GM12878 (cell line): ENCODE measurements at regions of chr5 and their contacts with region 1.

Region 1: GRCh38 chr5:95846554-95847260 is 24.2 kb upstream of the GLRX start:
- DNase-seq: no peak
- ATAC-seq: peak; percentile 82
- H3K4me3 ChIP-seq: no peak overlapping the region
- H3K27ac ChIP-seq: no peak overlapping the region
- H3K4me1 ChIP-seq: peaks cover 12% of the 10 kb centered on the region
- H3K27me3 ChIP-seq: no peaks in the 10 kb centered on the region
- CTCF ChIP-seq: peak; percentile 88 to 97 (median 95); a peak in 5 of 6 replicates
- EP300 ChIP-seq: no peak
- POLR2A ChIP-seq: no peak
- RAD21 ChIP-seq: peak; percentile 98

Region 2: GRCh38 chr5:95283761-95284415 is 562.8 kb before region 1 on chr5:
- CTCF ChIA-PET with region 1: no interaction called
- POLR2A ChIA-PET with region 1: no interaction called
- RAD21 ChIA-PET with region 1: no interaction called
- SMC1A ChIA-PET with region 1: no interaction called
- in situ Hi-C with region 1: no loop called
- intact Hi-C with region 1: loop called (anchors 5 kb)
- DNase-seq: no peak
- ATAC-seq: peak; percentile 86
- H3K4me3 ChIP-seq: peak overlapping the region; percentile 67
- H3K27ac ChIP-seq: no peak overlapping the region
- H3K4me1 ChIP-seq: no peaks in the 10 kb centered on the region
- H3K27me3 ChIP-seq: peaks cover 2 to 18% of the 10 kb centered on the region in 2 experiments
- CTCF ChIP-seq: peak; percentile 33 to 56 (median 55); a peak in 5 of 6 replicates
- EP300 ChIP-seq: no peak
- POLR2A ChIP-seq: no peak
- RAD21 ChIP-seq: no peak

Region 3: GRCh38 chr5:95655575-95655974 is 191.1 kb before region 1 on chr5:
- CTCF ChIA-PET with region 1: interaction called, 8 read pairs
- POLR2A ChIA-PET with region 1: interaction called, 3 read pairs
- RAD21 ChIA-PET with region 1: no interaction called
- SMC1A ChIA-PET with region 1: interaction called, 19 read pairs
- in situ Hi-C with region 1: loop called (anchors 5 kb)
- intact Hi-C with region 1: no loop called
- DNase-seq: no peak
- ATAC-seq: no peak
- H3K4me3 ChIP-seq: no peak overlapping the region
- H3K27ac ChIP-seq: no peak overlapping the region
- H3K4me1 ChIP-seq: no peaks in the 10 kb centered on the region
- H3K27me3 ChIP-seq: no peaks in the 10 kb centered on the region
- CTCF ChIP-seq: no peak
- EP300 ChIP-seq: no peak
- POLR2A ChIP-seq: no peak
- RAD21 ChIP-seq: no peak

Region 4: DNA sequence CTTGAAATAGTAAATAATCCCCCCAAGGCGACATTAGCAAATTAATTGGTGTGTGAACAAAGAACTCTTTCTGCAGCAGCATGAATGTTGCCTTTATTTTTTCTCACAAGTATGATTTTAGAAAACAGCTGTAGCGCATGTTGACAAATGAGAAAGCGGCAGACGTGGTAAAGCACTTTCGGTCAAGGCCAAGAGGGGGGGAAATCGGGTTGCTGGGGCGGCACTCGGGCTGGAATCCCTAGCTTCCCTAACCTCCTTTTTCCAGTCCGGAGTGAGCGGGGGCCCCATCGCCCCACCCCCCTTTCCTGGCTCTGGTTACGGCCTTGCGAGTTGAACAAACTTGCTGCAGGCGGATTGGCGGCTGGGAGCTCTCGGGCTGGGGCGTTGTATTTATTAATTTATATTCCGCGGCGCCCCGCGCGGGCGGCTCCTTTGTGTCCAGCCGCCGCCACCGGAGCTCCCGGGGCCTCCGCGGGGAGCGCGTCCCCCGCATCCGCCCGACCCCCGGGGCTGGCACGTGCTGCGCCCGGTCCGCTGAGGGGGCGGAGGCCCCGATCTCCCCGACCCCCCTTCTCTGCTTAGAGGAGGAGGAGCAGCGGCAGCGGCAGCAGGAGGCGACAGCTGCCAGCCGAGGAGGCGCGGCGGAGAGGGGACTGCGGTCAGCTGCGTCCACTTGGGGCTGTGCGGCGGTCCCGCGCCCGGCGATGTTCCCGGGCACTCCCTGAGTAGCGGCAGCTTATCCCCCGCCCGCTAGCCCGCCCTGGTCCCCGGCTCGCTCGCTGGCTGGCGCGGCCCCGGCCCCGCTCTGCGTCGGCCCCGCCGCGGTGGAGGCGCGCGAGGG is 115.8 kb before region 1 on chr5 and contains the start of gene RHOBTB3:
- CTCF ChIA-PET with region 1: interaction called, 8 read pairs
- POLR2A ChIA-PET with region 1: interaction called, 4 read pairs
- RAD21 ChIA-PET with region 1: interaction called, 13 read pairs
- SMC1A ChIA-PET with region 1: interaction called, 5 read pairs
- in situ Hi-C with region 1: no loop called
- intact Hi-C with region 1: no loop called
- DNase-seq: no peak
- ATAC-seq: peak; percentile 53
- H3K4me3 ChIP-seq: peak within 1 kb of the TSS; percentile 78
- H3K27ac ChIP-seq: peak within 1 kb of the TSS; percentile 70
- H3K4me1 ChIP-seq: peaks cover 21% of the 10 kb centered on the region
- H3K27me3 ChIP-seq: no peaks in the 10 kb centered on the region
- CTCF ChIP-seq: peak in 2 of 3 experiments; percentile 4 to 22; a peak in 3 of 6 replicates
- EP300 ChIP-seq: 0 out of 4 replicates have a peak, but pooled peaks of 1 of the 2 experiments have one; percentile 8
- POLR2A ChIP-seq: peak; percentile 77
- RAD21 ChIP-seq: no peak
- polyA plus RNA-seq, gene RHOBTB3: 3.6 to 4.1 TPM

Region 5: GRCh38 chr5:95786901-95787300 is 59.8 kb before region 1 on chr5:
- CTCF ChIA-PET with region 1: interaction called, 653 read pairs
- POLR2A ChIA-PET with region 1: no interaction called
- RAD21 ChIA-PET with region 1: interaction called, 209 read pairs
- SMC1A ChIA-PET with region 1: interaction called, 622 read pairs
- in situ Hi-C with region 1: no loop called
- intact Hi-C with region 1: no loop called
- DNase-seq: no peak
- ATAC-seq: no peak
- H3K4me3 ChIP-seq: no peak overlapping the region
- H3K27ac ChIP-seq: no peak overlapping the region
- H3K4me1 ChIP-seq: no peaks in the 10 kb centered on the region
- H3K27me3 ChIP-seq: no peaks in the 10 kb centered on the region
- CTCF ChIP-seq: no peak
- EP300 ChIP-seq: no peak
- POLR2A ChIP-seq: no peak
- RAD21 ChIP-seq: no peak

Region 6: DNA sequence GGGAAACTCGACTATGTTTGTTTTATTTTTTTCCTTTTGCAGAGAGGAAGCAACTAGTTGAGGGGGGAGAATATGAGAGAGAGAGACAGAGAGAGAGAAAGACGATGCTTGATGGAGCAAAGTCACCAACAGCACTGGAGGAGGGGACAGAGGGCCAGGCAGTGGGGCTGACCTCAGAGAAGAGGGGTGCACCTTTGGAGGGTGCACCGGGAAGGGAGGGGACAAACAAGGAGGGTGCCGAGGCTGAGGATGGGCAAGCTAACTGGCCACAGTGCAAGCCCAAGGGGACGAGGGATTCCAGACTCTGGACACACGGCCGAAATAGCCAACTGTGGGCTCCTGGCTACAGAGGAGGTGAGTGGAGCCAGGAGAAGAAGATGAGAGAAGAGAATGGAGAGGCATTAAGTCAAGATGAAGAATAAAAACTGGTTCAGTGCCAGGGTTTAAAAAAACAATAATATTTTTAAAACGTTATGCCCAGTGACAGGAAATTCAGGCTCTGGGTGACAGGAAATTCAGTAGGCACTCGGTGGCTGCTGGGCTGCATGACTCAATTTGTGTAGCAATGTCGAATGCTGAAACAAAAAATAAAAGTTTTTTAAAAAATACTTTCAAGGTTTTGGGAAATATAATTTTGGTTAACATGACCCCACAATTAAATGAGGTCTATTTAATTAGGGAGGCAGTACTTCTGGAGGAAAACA is 10.9 kb before region 1 on chr5:
- CTCF ChIA-PET with region 1: interaction called, 13 read pairs
- POLR2A ChIA-PET with region 1: no interaction called
- RAD21 ChIA-PET with region 1: interaction called, 4 read pairs
- SMC1A ChIA-PET with region 1: interaction called, 8 read pairs
- in situ Hi-C with region 1: no loop called
- intact Hi-C with region 1: no loop called
- DNase-seq: no peak
- ATAC-seq: peak; percentile 45
- H3K4me3 ChIP-seq: peak overlapping the region; percentile 72
- H3K27ac ChIP-seq: peak overlapping the region; percentile 86
- H3K4me1 ChIP-seq: peaks cover 22% of the 10 kb centered on the region
- H3K27me3 ChIP-seq: no peaks in the 10 kb centered on the region
- CTCF ChIP-seq: no peak
- EP300 ChIP-seq: no peak
- POLR2A ChIP-seq: no peak
- RAD21 ChIP-seq: no peak